ENCODE measurements at regions of chr10 and their contacts with region 1.

Region 1: DNA sequence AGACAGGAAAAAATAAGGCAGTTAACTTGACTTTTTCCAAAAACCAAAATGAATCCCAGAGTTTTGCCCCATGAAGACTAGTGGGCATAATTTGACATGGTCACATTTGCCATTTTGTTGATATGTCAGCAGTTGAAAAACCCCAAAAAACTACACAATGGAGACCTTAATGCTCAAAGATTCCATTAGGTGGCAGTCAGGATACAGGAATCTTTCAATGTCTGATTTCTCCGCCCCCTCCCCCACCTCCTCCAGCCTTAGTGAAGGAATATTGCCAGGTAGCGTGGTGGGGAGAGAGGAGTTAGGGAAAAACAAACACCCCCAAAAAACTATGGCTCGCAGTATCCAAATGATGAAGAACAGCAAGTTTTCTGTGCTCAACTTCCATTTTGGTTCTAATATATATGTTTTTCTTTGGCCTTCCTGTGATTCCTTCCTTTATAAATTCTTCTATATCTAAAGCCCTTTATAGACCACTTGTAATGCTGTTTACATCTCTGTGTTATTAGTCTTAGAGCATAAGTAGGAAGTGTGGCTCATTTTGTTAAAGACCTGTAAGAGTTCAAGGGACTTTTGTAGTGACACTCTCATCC is 6.7 kb upstream of the SMNDC1 start:
- DNase-seq: peak; percentile 65
- H3K4me3 ChIP-seq: peak overlapping the region in 1 of 3 experiments; percentile 33
- H3K27ac ChIP-seq: peak overlapping the region; percentile 72
- H3K4me1 ChIP-seq: peaks cover 47% of the 10 kb centered on the region
- H3K27me3 ChIP-seq: no peaks in the 10 kb centered on the region
- CTCF ChIP-seq: peak; percentile 54 to 55
- POLR2A ChIP-seq: no peak

Region 2: DNA sequence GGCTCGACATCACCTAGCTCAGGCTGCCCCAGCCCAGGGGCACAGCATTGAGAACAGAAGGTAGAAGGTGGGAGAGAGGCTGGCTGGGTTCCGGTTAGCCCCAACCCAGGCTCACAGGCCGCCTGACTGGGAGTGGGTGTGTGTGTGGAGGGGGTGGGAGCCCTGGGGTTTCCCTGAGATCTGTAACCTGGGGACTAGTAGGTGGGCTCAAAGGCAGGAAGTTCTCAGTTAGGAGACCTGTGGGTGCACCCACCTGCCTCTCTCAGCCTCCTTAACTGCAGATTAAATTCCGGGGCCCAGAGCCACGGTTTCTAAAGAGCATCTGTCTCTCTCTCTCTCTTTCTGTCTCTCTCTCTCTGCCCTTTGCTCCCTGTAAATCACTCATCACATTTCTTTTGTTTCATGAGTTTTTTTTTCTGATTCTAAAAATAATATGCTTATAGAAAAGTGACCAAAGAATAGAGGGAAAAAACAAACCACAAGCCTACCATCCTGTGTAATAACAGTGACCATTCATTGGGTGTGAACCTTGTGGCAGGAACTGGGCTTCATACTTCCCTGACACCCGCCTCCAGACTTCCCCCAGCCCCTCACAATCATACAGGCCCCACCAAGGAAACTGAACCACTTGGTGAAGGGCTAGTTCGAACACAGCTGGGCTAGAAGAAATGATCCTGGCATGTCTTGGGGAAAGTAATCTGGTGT is 76.7 kb after region 1 on chr10:
- CTCF ChIA-PET with region 1: no interaction called
- POLR2A ChIA-PET with region 1: no interaction called
- dilution Hi-C with region 1: no loop called
- intact Hi-C with region 1: loop called (anchors 2 kb)
- DNase-seq: peak; percentile 90
- H3K4me3 ChIP-seq: no peak overlapping the region
- H3K27ac ChIP-seq: peak overlapping the region; percentile 69
- H3K4me1 ChIP-seq: peaks cover 33% of the 10 kb centered on the region
- H3K27me3 ChIP-seq: no peaks in the 10 kb centered on the region
- CTCF ChIP-seq: no peak
- POLR2A ChIP-seq: no peak

Region 3: GRCh38 chr10:110502851-110503301 is 191.4 kb after region 1 on chr10:
- CTCF ChIA-PET with region 1: interaction called, 32 read pairs
- POLR2A ChIA-PET with region 1: no interaction called
- dilution Hi-C with region 1: no loop called
- intact Hi-C with region 1: no loop called
- DNase-seq: peak; percentile 49
- H3K4me3 ChIP-seq: no peak overlapping the region
- H3K27ac ChIP-seq: peak overlapping the region; percentile 92
- H3K4me1 ChIP-seq: peaks cover 69% of the 10 kb centered on the region
- H3K27me3 ChIP-seq: no peaks in the 10 kb centered on the region
- CTCF ChIP-seq: no peak
- POLR2A ChIP-seq: no peak

Region 4: DNA sequence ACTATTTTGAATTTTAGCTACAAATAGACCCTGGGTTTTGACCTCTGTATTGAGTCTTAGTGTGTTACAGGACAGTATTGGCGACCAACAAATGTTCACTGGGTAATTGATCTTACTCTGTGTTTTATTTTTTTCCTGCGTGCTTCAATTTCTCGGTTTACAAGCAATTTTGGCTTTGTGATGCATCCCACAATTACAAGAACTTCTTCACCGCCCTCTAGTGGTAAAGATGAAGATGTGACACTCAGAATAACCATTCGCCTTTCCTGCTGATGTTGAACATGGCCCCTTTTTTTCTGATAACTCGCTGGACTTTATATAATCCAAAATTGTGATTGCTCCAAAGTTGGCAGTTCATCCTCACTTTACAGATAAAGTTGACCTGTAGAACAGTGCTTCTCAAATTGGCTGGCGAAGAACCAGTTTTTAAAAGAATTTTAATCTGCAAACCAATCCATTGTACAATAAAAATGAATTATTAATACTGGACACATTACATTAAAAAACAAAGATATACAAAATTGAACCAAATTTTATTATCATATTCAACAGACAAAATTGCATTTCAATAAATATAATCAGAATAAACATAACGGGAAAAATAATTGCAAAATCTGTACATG is 235.8 kb after region 1 on chr10:
- CTCF ChIA-PET with region 1: interaction called, 49 read pairs
- POLR2A ChIA-PET with region 1: no interaction called
- dilution Hi-C with region 1: no loop called
- intact Hi-C with region 1: loop called (anchors 1 kb)
- DNase-seq: peak; percentile 61
- H3K4me3 ChIP-seq: no peak overlapping the region
- H3K27ac ChIP-seq: no peak overlapping the region
- H3K4me1 ChIP-seq: peaks cover 13% of the 10 kb centered on the region
- H3K27me3 ChIP-seq: peaks cover 1 to 4% of the 10 kb centered on the region in 2 experiments
- CTCF ChIP-seq: peak; percentile 63 to 68
- POLR2A ChIP-seq: no peak

Region 5: GRCh38 chr10:110556969-110557601 is 245.6 kb after region 1 on chr10:
- CTCF ChIA-PET with region 1: interaction called, 12 read pairs
- POLR2A ChIA-PET with region 1: no interaction called
- dilution Hi-C with region 1: no loop called
- intact Hi-C with region 1: no loop called
- DNase-seq: peak; percentile 44
- H3K4me3 ChIP-seq: no peak overlapping the region
- H3K27ac ChIP-seq: no peak overlapping the region
- H3K4me1 ChIP-seq: no peaks in the 10 kb centered on the region
- H3K27me3 ChIP-seq: peaks cover 2% of the 10 kb centered on the region in 2 experiments
- CTCF ChIP-seq: peak; percentile 38 to 63
- POLR2A ChIP-seq: no peak

Region 6: DNA sequence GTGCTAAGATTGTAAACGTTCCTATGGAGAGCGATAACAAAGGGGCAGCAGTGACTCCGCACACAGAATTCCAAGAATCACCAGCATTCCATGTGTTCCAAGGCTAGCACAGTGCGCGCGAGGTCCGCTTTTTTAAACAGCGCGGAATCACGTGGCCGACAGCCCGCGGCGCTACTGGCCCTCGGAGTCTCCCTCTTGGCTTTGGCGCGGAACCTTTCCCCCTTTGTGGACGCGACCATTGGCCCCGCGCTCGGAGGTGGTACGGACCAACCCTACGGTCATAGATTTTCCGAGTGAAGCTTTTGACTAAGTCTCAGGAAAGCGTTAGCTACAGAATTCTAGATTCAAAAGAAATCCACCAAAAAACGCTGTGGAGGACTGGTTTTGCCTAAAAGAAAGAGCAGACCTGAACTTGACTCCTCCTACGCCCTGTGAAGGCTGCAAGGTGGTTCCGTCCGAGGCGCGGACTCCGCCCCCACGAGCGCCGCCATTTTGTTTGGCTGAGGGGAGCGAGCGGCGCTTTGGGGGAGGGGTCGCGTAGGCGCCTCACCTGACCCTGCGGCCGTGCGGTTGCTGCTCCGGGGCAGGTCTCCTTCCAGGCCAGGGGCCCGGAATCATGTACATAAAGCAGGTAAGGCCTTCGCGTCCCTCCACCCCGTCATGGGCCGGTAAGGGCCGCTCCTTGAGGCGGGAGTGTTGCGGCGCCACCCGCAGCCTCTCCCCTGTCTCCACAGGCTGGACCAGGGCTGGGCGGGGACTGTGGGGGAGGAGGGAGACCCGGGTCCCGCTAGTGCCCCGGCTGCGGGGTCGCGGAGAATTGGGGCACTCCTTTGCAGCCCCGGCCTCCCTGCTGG is 256.0 kb after region 1 on chr10 and contains the start of gene SMC3:
- CTCF ChIA-PET with region 1: interaction called, 3 read pairs
- POLR2A ChIA-PET with region 1: no interaction called
- dilution Hi-C with region 1: no loop called
- intact Hi-C with region 1: loop called (anchors 1 kb)
- DNase-seq: peak; percentile 96
- H3K4me3 ChIP-seq: peak within 1 kb of the TSS; percentile 65 to 95 (median 90)
- H3K27ac ChIP-seq: peak within 1 kb of the TSS; percentile 96
- H3K4me1 ChIP-seq: peaks cover 14% of the 10 kb centered on the region
- H3K27me3 ChIP-seq: peaks cover 0 to 1% of the 10 kb centered on the region in 2 experiments
- CTCF ChIP-seq: no peak
- POLR2A ChIP-seq: peak; percentile 61
- total RNA-seq, gene SMC3: 44.2 and 45.0 TPM in 2 replicates

Region 7: DNA sequence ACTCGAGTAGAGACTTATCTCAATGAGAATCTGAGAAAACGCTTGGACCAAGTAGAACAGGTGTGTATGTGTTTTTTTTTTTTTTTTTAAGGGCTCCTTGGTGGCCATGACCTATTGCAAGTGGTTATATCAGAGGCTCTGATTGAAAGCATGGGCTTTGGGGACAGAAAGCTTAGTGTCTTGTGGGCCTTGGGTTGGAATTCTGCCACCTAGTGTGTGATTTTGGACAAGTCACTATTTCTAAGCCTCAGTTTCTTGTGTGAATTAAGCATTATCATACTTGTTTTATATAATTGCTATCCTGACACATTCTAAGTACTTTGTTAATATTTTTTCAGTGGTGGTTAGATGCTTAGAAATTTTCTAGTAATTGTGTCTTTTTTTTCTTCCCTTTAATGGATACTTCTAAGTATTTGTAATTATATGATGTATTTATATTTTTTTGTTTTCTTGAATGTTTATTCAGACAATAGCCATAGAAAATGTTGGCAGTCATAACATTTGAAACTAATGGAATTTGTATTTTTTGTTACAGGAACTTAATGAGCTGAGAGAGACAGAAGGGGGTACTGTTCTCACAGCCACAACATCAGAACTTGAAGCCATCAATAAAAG is 289.1 kb after region 1 on chr10:
- CTCF ChIA-PET with region 1: interaction called, 80 read pairs
- POLR2A ChIA-PET with region 1: no interaction called
- dilution Hi-C with region 1: no loop called
- intact Hi-C with region 1: loop called (anchors 1 kb)
- DNase-seq: peak; percentile 80
- H3K4me3 ChIP-seq: no peak overlapping the region
- H3K27ac ChIP-seq: no peak overlapping the region
- H3K4me1 ChIP-seq: peaks cover 6% of the 10 kb centered on the region
- H3K27me3 ChIP-seq: no peaks in the 10 kb centered on the region
- CTCF ChIP-seq: peak; percentile 42 to 59
- POLR2A ChIP-seq: no peak

Measured in endothelial cell of umbilical vein (primary cell).